OCI-LY7 (cell line): ENCODE measurements at regions of chr17 and their contacts with region 1.

Region 1: GRCh38 chr17:72205357-72205756 is 84.5 kb downstream of the SOX9 start:
- DNase-seq: no peak
- H3K4me3 ChIP-seq: no peak overlapping the region
- H3K27ac ChIP-seq: no peak overlapping the region
- H3K4me1 ChIP-seq: no peaks in the 10 kb centered on the region
- CTCF ChIP-seq: no peak

Region 2: GRCh38 chr17:72219824-72220493 is 14.6 kb after region 1 on chr17:
- CTCF ChIA-PET with region 1: interaction called, 10 read pairs
- POLR2A ChIA-PET with region 1: no interaction called
- intact Hi-C with region 1: no loop called
- DNase-seq: no peak
- H3K4me3 ChIP-seq: no peak overlapping the region
- H3K27ac ChIP-seq: no peak overlapping the region
- H3K4me1 ChIP-seq: no peaks in the 10 kb centered on the region
- CTCF ChIP-seq: no peak